GM13977 (cell line): ENCODE measurements at regions of chr6 and their contacts with region 1.

Region 1: DNA sequence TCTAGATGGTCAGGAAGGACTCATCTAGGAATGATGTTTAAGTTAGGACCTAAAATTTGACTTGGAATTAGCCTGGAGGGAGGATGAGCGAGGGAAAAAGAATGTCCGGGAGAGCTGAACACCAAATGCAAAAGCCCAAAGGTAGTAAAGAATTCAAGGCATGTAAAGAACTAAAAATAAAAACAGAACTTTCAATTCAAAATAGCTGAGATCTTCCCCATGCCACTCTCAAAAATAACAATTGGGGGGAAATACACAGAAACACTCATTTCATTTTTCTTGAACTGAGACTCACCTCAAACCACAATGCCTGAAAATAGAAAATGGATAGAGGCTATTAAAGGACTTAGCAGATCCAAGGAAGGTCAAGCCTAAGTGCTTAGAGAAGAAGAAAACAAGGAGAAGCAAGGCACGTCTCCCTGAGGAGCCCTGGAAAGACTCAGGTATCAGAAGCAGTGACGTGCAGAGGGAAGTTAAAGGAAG is 10.5 kb downstream of the PXT1 start:
- DNase-seq: peak; percentile 28
- CTCF ChIP-seq: no peak

Region 2: DNA sequence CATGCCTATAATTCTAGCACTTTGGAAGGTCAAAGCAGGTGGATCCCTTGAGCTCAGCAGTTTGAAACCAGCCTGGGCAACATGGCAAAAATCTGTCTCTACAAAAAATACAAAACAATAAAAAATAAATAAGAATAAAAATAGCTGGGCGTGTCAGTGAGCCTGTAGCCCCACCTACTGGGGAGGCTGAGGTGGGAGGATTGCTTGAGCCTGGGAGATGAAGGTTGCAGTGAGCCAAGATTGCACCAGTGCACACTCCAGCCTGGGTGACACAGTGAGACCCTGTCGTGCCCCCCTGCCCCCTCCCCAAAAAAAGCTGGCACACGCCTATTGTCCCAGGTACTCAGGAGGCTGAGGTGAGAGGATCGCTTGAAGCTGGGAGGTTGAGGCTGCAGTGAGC is 476.2 kb before region 1 on chr6:
- in situ Hi-C with region 1: no loop called
- DNase-seq: no peak
- CTCF ChIP-seq: peak; percentile 39

Region 3: DNA sequence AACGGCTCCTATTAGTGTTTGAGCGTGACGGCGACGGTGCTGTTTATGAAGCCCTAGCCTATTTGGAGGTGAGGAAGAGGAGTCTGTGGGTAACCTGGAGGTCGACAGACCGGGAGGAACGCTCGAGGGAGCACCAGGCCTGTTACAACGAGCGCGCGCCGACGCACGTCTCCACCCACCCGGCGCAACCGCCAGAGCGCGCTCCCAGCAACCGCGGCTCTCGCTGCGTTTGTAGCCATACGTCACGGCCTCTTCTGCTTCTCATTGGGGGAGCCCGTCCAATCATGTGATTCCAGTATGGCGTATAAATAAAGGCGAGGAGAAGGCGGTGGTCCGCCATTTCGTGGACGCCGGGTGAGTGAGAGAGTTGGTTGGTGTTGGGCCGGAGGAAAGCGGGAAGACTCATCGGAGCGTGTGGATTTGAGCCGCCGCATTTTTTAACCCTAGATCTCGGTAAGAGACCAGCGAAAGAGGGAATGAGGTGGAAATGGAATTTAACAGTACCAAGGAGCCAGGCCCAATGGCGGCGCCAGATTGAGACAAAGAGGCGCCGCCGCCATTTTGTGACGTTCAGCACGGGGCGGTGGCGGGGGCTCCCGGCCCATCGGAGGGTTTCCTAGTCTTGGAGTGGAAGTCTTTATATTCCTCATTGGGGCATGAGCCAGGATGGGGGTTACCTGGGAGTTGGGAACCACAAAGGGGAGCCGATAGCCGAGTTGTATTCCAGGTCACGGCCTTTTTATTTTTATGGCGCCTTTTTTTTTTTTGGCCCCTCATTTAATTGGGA is 162.0 kb after region 1 on chr6 and contains the start of gene SRSF3:
- in situ Hi-C with region 1: loop called (anchors 10 kb)
- DNase-seq: peak; percentile 93
- CTCF ChIP-seq: peak; percentile 37

Region 4: GRCh38 chr6:36623547-36624459 is 191.6 kb after region 1 on chr6:
- in situ Hi-C with region 1: no loop called
- DNase-seq: peak; percentile 80
- CTCF ChIP-seq: peak; percentile 94